Activated CD4-positive, alpha-beta memory T cell treated with anti-CD3 and anti-CD28 coated beads, Interleukin-2, amount 10 ng/mL, durations not matched to agents 7 days and 5 days (primary cell): ENCODE measurements at regions of chr2 and their contacts with region 1.

Region 1: GRCh38 chr2:106193977-106194778 is at the start of gene UXS1:
- DNase-seq: peak; percentile 98
- H3K4me3 Mint-ChIP-seq: peak within 1 kb of the TSS; percentile 91
- H3K27ac Mint-ChIP-seq: peak within 1 kb of the TSS; percentile 81
- H3K4me1 Mint-ChIP-seq: peaks cover 41% of the 10 kb centered on the region
- H3K27me3 Mint-ChIP-seq: no peaks in the 10 kb centered on the region
- total RNA-seq, gene UXS1: 74.4 to 74.6 TPM

Region 2: GRCh38 chr2:106147159-106147558 is 47.0 kb before region 1 on chr2:
- CTCF ChIA-PET with region 1: interaction called, 5 read pairs
- POLR2A ChIA-PET with region 1: interaction called, 20 read pairs
- DNase-seq: no peak
- H3K4me3 Mint-ChIP-seq: no peak overlapping the region
- H3K27ac Mint-ChIP-seq: peak overlapping the region; percentile 90
- H3K4me1 Mint-ChIP-seq: peaks cover 81% of the 10 kb centered on the region
- H3K27me3 Mint-ChIP-seq: no peaks in the 10 kb centered on the region